PC-3 (cell line): ENCODE measurements at regions of chr7 and their contacts with region 1.

Region 1: DNA sequence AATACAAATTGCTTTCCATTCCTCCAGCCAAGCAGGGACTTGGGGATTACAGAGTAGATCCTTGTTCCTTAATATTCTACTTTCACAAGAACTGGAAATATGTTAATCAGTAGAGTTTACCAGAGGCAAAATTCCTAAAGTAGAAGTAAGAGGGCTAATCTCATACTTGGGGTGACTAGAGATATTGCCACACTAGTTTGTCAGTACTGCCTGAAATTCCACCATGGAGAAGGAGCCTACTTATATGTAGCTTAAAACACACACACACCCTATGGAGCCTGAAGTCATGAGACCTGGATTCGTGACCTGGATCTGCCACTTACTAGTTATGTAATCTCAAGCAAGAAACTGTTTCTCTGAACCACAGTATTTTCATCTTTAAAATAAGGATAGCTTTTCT is 33.9 kb downstream of the STRIP2 start:
- DNase-seq: no peak
- ATAC-seq: no peak
- H3K4me3 ChIP-seq: no peak overlapping the region
- H3K27ac ChIP-seq: no peak overlapping the region
- H3K4me1 ChIP-seq: peaks cover 23% of the 10 kb centered on the region
- H3K27me3 ChIP-seq: no peaks in the 10 kb centered on the region
- CTCF ChIP-seq: no peak

Region 2: GRCh38 chr7:129343099-129343700 is 124.9 kb before region 1 on chr7:
- CTCF ChIA-PET with region 1: interaction called, 10 read pairs
- POLR2A ChIA-PET with region 1: no interaction called
- intact Hi-C with region 1: loop called (anchors 1 kb)
- DNase-seq: peak; percentile 68
- ATAC-seq: peak; percentile 85
- H3K4me3 ChIP-seq: no peak overlapping the region
- H3K27ac ChIP-seq: no peak overlapping the region
- H3K4me1 ChIP-seq: no peaks in the 10 kb centered on the region; the same call in none of the 2 replicates
- H3K27me3 ChIP-seq: no peaks in the 10 kb centered on the region
- CTCF ChIP-seq: peak; percentile 86

Region 3: GRCh38 chr7:129401967-129402860 is 65.9 kb before region 1 on chr7:
- CTCF ChIA-PET with region 1: interaction called, 7 read pairs
- POLR2A ChIA-PET with region 1: no interaction called
- intact Hi-C with region 1: loop called (anchors 1 kb)
- DNase-seq: peak; percentile 45
- ATAC-seq: peak; percentile 31
- H3K4me3 ChIP-seq: no peak overlapping the region
- H3K27ac ChIP-seq: peak overlapping the region; percentile 50
- H3K4me1 ChIP-seq: peaks cover 18% of the 10 kb centered on the region
- H3K27me3 ChIP-seq: no peaks in the 10 kb centered on the region
- CTCF ChIP-seq: peak; percentile 59

Region 4: DNA sequence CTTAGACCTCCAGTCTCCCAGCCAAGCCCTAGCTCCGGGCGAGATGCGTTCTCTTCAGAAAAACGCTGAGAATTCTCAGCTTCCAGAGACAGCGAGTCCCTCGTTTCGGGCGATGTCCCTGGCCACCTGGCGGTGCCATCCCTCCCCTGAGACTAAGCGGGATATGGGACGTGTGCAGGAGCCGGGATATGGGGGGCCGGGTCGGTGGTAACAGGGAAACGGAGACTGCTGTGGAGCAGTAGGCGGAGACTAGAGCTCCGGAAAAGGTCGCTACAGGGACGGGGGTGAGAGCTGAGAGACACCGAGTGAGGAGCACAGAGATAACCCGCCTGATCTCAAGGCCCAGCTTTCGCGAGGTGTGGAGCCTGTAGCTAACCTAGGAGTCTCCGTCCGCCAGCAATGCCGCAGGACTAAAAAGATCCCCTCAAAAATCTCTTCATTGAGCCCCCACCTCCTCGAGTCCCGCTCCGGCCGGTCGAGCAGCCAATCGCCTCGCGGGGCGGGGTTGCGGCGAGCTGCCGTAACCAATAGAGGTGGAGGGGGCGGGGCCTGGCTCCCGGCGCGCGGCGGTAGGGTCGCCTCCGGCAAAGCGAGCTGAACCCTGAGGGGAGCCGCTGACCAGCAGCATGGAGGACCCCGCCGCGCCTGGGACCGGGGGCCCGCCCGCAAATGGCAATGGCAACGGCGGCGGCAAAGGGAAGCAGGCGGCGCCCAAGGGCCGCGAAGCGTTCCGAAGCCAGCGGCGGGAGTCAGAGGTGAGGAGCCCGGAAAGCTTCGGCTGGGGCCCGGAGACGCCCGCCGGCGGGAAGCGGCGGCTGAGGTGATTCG is 34.0 kb before region 1 on chr7 and contains the start of gene STRIP2:
- CTCF ChIA-PET with region 1: interaction called, 6 read pairs
- POLR2A ChIA-PET with region 1: interaction called, 5 read pairs
- intact Hi-C with region 1: loop called (anchors 1 kb)
- DNase-seq: peak; percentile 82
- ATAC-seq: peak; percentile 79
- H3K4me3 ChIP-seq: peak within 1 kb of the TSS; percentile 77
- H3K27ac ChIP-seq: no peak within 1 kb of the TSS
- H3K4me1 ChIP-seq: peaks cover 32% of the 10 kb centered on the region
- H3K27me3 ChIP-seq: no peaks in the 10 kb centered on the region
- CTCF ChIP-seq: peak; percentile 20; the same call in 1 of the 2 replicates
- total RNA-seq, gene STRIP2: 7.5 and 8.0 TPM in 2 replicates

Region 5: GRCh38 chr7:129514683-129515082 is 46.6 kb after region 1 on chr7:
- CTCF ChIA-PET with region 1: no interaction called
- POLR2A ChIA-PET with region 1: no interaction called
- intact Hi-C with region 1: no loop called
- DNase-seq: no peak
- ATAC-seq: no peak
- H3K4me3 ChIP-seq: no peak overlapping the region
- H3K27ac ChIP-seq: no peak overlapping the region
- H3K4me1 ChIP-seq: no peaks in the 10 kb centered on the region
- H3K27me3 ChIP-seq: no peaks in the 10 kb centered on the region
- CTCF ChIP-seq: no peak